BJ (cell line): ENCODE measurements at regions of chr7 and their contacts with region 1.

Region 1: DNA sequence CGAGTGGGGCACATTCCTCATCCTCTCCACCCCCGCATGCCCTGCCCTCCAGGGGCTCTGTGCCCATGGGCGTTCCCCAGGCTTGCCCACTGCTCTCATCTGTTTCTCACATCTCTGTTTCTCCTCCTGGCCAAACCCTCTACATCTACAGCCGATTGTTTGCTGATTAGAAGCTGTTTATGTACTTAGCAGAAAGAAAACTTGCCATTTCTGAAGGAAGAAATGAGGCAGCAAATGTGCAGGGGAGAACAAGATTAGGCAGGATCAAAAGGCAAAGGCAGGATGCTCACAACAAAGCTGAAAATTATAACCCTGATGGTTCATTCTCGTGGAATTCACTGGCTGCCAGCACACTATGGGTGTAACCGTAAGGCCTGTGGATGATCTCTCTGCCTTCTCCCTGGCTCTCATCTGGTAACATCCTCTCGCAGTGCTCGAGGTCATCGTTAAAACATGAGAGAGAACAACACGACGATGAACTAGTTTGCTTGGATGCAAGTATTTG is 111.6 kb upstream of the KLF14 start:
- DNase-seq: peak; percentile 82
- H3K4me3 ChIP-seq: no peak overlapping the region
- H3K27me3 ChIP-seq: no peaks in the 10 kb centered on the region
- CTCF ChIP-seq: no peak

Region 2: DNA sequence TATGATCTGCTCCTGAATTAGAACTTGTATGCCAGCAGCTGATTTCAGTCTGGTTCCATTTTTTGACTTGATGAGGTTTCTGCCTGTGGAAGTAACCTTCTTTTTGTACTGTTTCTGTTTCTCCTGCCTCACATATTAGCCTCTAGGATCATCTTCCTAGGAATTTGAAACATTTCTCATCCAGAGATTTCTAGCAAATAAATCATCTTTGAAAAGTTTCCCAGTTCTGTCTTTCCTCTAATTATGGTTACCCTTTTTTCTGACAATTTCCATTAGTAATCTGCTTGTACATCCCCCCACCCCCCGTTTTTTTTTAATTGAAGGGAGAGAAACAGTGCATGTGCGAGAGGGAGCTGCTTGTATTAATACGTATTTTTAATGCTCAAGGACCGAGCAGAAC is 1141.9 kb before region 1 on chr7:
- CTCF ChIA-PET with region 1: no interaction called
- POLR2A ChIA-PET with region 1: interaction called, 21 read pairs
- DNase-seq: no peak
- H3K4me3 ChIP-seq: no peak overlapping the region
- H3K27me3 ChIP-seq: no peaks in the 10 kb centered on the region
- CTCF ChIP-seq: no peak

Region 3: DNA sequence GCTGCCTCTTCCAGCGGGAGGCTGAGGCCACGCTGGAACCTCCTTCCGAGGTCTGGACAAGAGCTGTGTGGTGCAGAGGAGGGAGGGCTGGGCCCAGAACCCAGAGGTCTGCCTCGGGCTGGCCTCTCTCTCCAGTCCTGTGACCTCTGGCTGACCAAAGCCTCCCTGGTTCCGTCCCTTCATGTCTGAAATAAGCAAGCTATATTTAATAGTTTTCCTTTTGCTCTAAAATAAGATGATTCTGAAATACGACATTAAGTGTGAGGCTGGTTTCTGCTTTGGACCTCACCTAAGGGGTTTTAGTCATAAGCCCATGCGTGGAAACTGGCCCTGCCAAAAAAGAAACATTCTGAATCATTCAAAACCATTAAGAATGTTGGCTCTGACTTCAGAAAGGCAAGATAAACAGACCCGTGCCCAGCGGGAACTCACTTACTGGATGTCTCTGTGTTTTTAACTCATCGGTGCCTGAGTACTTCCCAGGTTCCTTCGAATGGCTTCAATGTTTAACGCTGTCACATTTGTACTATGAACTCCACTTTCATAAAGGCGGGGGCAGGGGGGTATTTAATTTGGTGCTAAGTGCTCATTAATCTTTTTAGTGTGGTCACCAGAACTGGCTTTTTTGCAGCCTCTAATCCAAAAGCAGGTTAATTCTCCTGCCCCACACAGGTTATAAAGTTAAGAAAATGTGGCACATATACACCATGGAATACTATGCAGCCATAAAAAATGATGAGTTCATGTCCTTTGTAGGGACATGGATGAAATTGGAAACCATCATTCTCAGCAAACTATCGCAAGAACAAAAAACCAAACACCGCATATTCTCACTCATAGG is 45.8 kb after region 1 on chr7:
- CTCF ChIA-PET with region 1: no interaction called
- POLR2A ChIA-PET with region 1: no interaction called
- DNase-seq: peak; percentile 91
- H3K4me3 ChIP-seq: no peak overlapping the region
- H3K27me3 ChIP-seq: no peaks in the 10 kb centered on the region
- CTCF ChIP-seq: no peak